PC-9 (cell line): ENCODE measurements at regions of chr9 and their contacts with region 1.

Region 1: GRCh38 chr9:80664327-80665200 is 1024.8 kb downstream of the TLE1 start:
- DNase-seq: no peak
- H3K4me3 ChIP-seq: no peak overlapping the region
- H3K27ac ChIP-seq: no peak overlapping the region
- H3K4me1 ChIP-seq: no peaks in the 10 kb centered on the region
- H3K27me3 ChIP-seq: no peaks in the 10 kb centered on the region
- CTCF ChIP-seq: peak; percentile 45; the same call in 1 of the 2 replicates

Region 2: DNA sequence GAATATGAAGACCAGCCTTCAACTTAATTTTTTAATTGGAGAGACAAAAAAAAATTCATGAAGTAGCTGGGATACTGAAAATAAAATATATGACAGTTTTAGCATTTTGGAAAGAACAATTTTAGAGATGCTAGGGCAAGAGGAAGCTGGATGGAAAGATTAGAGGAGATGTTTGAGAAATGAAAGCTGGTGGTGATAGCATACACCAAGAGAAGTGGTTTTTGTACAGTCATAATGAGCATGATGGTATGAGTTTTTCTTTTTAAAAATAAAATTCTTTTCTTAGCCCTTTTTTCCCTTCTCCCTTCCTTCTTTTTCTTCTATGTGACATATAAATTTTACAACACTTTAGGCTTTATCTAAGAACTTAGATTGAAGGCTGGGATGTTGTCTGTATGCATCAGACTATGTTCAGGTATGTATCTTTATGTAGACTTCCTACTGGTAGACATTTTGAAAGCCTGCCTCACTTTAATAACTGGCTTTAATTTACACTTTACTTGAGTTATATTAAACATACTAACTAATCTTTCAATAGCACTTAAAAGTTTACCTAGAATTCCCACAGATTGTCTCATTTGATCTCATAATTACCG is 570.3 kb before region 1 on chr9:
- CTCF ChIA-PET with region 1: interaction called, 10 read pairs
- POLR2A ChIA-PET with region 1: no interaction called
- intact Hi-C with region 1: no loop called
- DNase-seq: no peak
- H3K4me3 ChIP-seq: no peak overlapping the region
- H3K27ac ChIP-seq: no peak overlapping the region
- H3K4me1 ChIP-seq: no peaks in the 10 kb centered on the region
- H3K27me3 ChIP-seq: no peaks in the 10 kb centered on the region
- CTCF ChIP-seq: no peak

Region 3: GRCh38 chr9:80811003-80811402 is 146.4 kb after region 1 on chr9:
- CTCF ChIA-PET with region 1: no interaction called
- POLR2A ChIA-PET with region 1: no interaction called
- intact Hi-C with region 1: no loop called
- DNase-seq: no peak
- H3K4me3 ChIP-seq: no peak overlapping the region
- H3K27ac ChIP-seq: no peak overlapping the region
- H3K4me1 ChIP-seq: no peaks in the 10 kb centered on the region
- H3K27me3 ChIP-seq: no peaks in the 10 kb centered on the region
- CTCF ChIP-seq: no peak